Common myeloid progenitor, CD34-positive (primary cell): ENCODE measurements at regions of chr12 and their contacts with region 1.

Region 1: DNA sequence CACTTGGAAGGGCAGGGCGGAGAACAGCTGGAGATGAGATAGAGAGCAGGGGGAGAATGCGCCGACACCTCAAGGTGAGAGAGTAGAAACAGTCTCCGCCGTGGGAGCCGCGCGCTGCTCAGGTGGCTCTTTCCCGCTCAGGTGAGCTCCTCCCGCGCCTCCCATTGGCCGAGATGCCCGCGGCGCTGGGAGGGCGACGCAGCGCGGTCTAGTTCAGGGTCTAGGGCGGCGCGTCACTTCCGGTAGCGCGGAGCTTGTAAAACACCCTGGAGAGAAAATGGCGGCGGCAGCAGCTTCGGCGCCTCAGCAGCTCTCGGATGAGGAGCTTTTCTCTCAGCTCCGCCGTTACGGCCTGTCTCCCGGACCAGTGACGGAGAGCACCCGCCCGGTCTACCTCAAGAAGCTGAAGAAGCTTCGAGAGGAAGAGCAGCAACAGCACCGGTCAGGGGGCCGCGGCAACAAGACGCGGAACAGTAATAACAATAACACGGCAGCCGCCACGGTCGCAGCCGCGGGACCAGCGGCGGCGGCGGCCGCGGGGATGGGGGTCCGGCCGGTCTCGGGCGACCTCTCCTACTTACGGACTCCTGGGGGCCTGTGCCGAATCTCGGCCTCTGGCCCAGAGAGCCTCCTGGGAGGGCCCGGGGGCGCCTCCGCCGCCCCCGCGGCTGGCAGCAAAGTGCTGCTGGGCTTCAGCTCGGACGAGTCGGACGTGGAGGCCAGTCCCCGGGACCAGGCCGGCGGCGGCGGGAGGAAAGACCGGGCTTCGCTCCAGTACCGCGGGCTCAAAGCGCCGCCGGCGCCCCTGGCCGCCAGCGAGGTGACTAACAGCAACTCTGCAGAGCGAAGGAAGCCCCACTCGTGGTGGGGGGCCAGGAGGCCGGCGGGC is at the start of gene LEMD3:
- DNase-seq: peak; percentile 94 to 97 (median 96)
- H3K4me3 ChIP-seq: peak within 1 kb of the TSS; percentile 75 to 100 (median 96)
- H3K27ac ChIP-seq: peak within 1 kb of the TSS; percentile 92 to 96
- H3K4me1 ChIP-seq: peaks cover 15 to 48% (median 32%) of the 10 kb centered on the region in 4 experiments
- H3K27me3 ChIP-seq: no peaks in the 10 kb centered on the region

Region 2: DNA sequence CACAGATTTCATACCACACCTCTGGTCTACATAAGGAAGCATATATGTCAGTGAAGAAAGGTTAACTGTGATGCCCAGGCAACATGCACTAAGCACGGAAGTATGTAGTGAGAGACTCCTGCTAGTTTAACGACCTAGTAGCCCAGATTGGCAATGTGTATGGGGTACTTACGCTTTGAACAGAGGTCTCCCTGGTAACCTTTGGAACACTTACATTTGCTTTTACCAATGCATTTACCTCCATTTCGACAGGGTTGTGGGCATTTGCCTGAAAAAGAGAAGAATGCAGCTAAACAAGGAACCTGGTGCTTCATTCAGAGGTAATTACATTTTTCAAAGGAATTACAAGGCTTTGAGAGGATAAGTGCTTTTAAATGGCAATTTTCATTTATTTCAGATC is 113.7 kb before region 1 on chr12:
- CTCF ChIA-PET with region 1: no interaction called
- POLR2A ChIA-PET with region 1: no interaction called
- DNase-seq: no peak
- H3K4me3 ChIP-seq: no peak overlapping the region
- H3K27ac ChIP-seq: no peak overlapping the region
- H3K4me1 ChIP-seq: no peaks in the 10 kb centered on the region
- H3K27me3 ChIP-seq: no peaks in the 10 kb centered on the region

Region 3: GRCh38 chr12:65156366-65156841 is 13.2 kb before region 1 on chr12:
- CTCF ChIA-PET with region 1: interaction called, 23 read pairs
- POLR2A ChIA-PET with region 1: no interaction called
- DNase-seq: peak; percentile 49 to 88 (median 83)
- H3K4me3 ChIP-seq: peak overlapping the region in 6 of 7 experiments; percentile 15 to 60 (median 33)
- H3K27ac ChIP-seq: peak overlapping the region; percentile 19 to 63
- H3K4me1 ChIP-seq: peaks cover 6 to 20% (median 12%) of the 10 kb centered on the region in 4 experiments
- H3K27me3 ChIP-seq: no peaks in the 10 kb centered on the region

Region 4: GRCh38 chr12:65259501-65259900 is 89.9 kb after region 1 on chr12:
- CTCF ChIA-PET with region 1: no interaction called
- POLR2A ChIA-PET with region 1: no interaction called
- DNase-seq: no peak
- H3K4me3 ChIP-seq: no peak overlapping the region
- H3K27ac ChIP-seq: no peak overlapping the region
- H3K4me1 ChIP-seq: peaks cover 0 to 2% (median 0%) of the 10 kb centered on the region in 4 experiments
- H3K27me3 ChIP-seq: no peaks in the 10 kb centered on the region

Region 5: DNA sequence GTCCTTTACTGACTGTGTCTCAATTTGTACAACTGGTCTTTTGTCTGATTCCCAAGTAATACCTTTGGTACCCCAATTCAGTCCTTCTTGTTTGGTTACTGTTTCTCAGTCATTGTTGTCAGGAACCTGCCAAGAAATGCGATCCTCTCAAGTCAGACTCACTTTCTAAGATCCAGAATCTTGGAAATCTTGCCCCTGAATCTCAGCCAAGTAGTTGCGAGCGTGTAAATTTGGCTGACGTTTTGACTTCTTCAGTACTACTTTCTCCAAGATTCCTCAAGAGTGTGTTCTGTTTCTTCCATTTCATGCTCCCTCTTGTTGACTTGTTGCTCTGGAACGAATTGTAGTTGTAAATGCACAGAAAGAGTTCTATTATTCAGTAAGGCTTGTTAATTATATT is 222.9 kb after region 1 on chr12:
- CTCF ChIA-PET with region 1: no interaction called
- POLR2A ChIA-PET with region 1: no interaction called
- DNase-seq: no peak
- H3K4me3 ChIP-seq: no peak overlapping the region
- H3K27ac ChIP-seq: no peak overlapping the region
- H3K4me1 ChIP-seq: no peaks in the 10 kb centered on the region
- H3K27me3 ChIP-seq: no peaks in the 10 kb centered on the region